ENCODE measurements at regions of chr5 and their contacts with region 1.

Region 1: DNA sequence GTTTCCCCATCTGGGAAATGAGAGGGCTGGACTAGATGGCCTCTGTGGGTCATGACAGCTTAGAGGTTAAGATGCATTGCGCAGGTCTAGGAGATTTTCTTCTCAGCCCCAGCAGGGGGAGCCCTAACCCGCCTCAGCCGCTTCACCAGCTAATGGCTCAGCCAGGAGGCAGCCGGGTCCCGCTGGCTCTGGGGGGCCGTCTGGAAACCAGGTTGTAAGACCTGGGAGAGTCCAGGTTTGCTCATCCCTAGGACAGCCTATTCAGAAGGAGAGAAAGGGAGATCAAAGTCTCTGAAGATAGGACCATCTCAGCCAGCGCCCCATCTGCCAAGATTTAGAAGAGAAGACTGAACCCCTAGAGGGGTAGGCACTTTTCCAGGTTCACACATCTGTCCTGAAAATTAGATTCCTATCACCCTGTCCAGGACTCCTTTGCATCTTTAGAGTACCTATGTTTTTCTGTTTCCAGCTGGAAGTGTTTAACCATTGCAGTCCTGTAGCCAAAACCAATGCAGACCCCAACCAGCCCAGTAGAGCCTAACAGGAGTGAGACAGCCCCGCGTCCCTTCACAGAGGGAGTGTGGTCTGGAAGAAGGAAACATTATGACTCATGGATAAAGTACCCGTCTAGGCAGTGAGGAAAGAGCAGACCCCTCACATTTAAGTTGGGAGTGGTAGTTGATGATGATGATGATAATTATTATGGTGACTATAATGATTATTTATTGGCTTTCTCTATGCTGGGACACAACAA is 27.5 kb downstream of the SPARC start:
- DNase-seq: peak; percentile 38 to 79
- H3K4me3 ChIP-seq: no peak overlapping the region
- H3K27ac ChIP-seq: no peak overlapping the region
- H3K4me1 ChIP-seq: no peaks in the 10 kb centered on the region
- H3K27me3 ChIP-seq: no peaks in the 10 kb centered on the region
- CTCF ChIP-seq: peak; percentile 93

Region 2: GRCh38 chr5:151719228-151720000 is 60.2 kb after region 1 on chr5:
- CTCF ChIA-PET with region 1: interaction called, 5 read pairs
- POLR2A ChIA-PET with region 1: no interaction called
- intact Hi-C with region 1: loop called (anchors 1 kb)
- DNase-seq: peak in 1 of 2 experiments; percentile 21
- H3K4me3 ChIP-seq: no peak overlapping the region
- H3K27ac ChIP-seq: no peak overlapping the region
- H3K4me1 ChIP-seq: 0 out of 2 replicates have a peak, but pooled peaks cover 3% of the 10 kb centered on the region
- H3K27me3 ChIP-seq: no peaks in the 10 kb centered on the region
- CTCF ChIP-seq: peak; percentile 66

Region 3: GRCh38 chr5:151961557-151961956 is 302.4 kb after region 1 on chr5:
- CTCF ChIA-PET with region 1: no interaction called
- POLR2A ChIA-PET with region 1: no interaction called
- intact Hi-C with region 1: no loop called
- DNase-seq: no peak
- H3K4me3 ChIP-seq: no peak overlapping the region
- H3K27ac ChIP-seq: no peak overlapping the region
- H3K4me1 ChIP-seq: no peaks in the 10 kb centered on the region
- H3K27me3 ChIP-seq: peaks cover 51% of the 10 kb centered on the region
- CTCF ChIP-seq: no peak

Region 4: DNA sequence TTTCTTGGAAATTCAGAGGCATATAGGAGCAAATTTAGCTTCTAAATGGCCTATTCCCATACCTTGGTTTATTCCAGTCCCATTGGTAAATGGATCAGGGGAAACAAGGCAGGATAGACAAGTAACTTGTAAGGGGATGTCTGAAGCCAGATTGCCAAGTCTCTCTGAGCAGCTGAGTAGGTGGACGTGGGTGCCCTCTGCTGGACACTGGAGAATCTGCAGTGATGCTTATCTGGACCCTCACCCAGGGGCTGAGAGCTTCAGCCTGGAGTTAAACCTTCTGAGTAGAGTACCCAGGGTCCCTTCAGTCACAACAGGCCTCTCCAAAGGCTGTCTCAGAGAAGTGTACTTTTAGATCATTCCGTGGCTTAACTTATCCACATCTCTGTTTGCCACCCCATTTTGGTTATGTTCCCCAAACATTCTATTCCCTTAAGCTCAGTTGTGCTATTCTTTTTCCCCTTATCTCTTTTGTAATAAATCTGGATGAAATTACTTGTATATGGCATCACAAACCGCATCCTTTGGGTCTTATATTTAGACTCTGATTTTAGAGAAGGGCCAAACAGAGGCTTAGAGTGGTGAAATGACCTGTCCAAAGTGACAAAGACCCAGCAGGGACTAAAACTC is 483.8 kb after region 1 on chr5:
- CTCF ChIA-PET with region 1: no interaction called
- POLR2A ChIA-PET with region 1: no interaction called
- intact Hi-C with region 1: loop called (anchors 5 kb)
- DNase-seq: peak in 1 of 2 experiments; percentile 41
- H3K4me3 ChIP-seq: no peak overlapping the region
- H3K27ac ChIP-seq: no peak overlapping the region
- H3K4me1 ChIP-seq: no peaks in the 10 kb centered on the region
- H3K27me3 ChIP-seq: no peaks in the 10 kb centered on the region
- CTCF ChIP-seq: peak; percentile 89

Region 5: GRCh38 chr5:152505442-152506042 is 846.4 kb after region 1 on chr5:
- CTCF ChIA-PET with region 1: no interaction called
- POLR2A ChIA-PET with region 1: no interaction called
- intact Hi-C with region 1: loop called (anchors 5 kb)
- DNase-seq: peak; percentile 41
- H3K4me3 ChIP-seq: no peak overlapping the region
- H3K27ac ChIP-seq: no peak overlapping the region
- H3K4me1 ChIP-seq: no peaks in the 10 kb centered on the region
- H3K27me3 ChIP-seq: no peaks in the 10 kb centered on the region
- CTCF ChIP-seq: peak; percentile 73